ENCODE measurements at regions of chr5 and their contacts with region 1.

Region 1: DNA sequence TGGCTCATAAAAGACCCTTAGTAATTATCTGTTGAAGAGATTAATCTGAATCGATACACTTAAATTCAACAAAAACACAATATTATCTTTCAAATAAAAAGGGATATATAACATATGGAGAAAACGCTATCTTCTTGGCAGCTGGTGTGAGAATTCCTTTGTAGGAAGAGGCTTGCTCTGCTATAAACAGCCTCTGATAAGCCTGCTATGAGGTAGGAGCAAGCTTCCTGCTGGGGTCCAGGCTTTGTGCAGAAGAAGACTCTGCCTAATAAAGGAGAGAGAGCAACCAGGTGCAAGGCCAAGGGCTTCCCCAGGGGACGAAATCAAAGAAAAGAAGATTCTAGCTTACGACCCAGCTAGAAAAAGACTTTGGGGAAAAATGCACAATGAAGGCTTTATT is 43.3 kb upstream of the SSBP2 start:
- DNase-seq: no peak
- ATAC-seq: no peak
- H3K4me3 ChIP-seq: no peak overlapping the region
- H3K27ac ChIP-seq: no peak overlapping the region
- H3K4me1 ChIP-seq: peaks cover 0 to 2% of the 10 kb centered on the region in 2 donors
- H3K27me3 ChIP-seq: no peaks in the 10 kb centered on the region
- CTCF ChIP-seq: no peak

Region 2: GRCh38 chr5:81851481-81852178 is 57.4 kb after region 1 on chr5:
- intact Hi-C with region 1: loop called in 1 of 2 experiments (anchors 10 kb)
- DNase-seq: peak; percentile 96 to 99 (median 98)
- ATAC-seq: peak; percentile 97
- H3K4me3 ChIP-seq: peak overlapping the region; percentile 45 to 47
- H3K27ac ChIP-seq: peak overlapping the region; percentile 93 to 95
- H3K4me1 ChIP-seq: peaks cover 11 to 25% of the 10 kb centered on the region in 2 donors
- H3K27me3 ChIP-seq: no peaks in the 10 kb centered on the region
- CTCF ChIP-seq: no peak

Region 3: DNA sequence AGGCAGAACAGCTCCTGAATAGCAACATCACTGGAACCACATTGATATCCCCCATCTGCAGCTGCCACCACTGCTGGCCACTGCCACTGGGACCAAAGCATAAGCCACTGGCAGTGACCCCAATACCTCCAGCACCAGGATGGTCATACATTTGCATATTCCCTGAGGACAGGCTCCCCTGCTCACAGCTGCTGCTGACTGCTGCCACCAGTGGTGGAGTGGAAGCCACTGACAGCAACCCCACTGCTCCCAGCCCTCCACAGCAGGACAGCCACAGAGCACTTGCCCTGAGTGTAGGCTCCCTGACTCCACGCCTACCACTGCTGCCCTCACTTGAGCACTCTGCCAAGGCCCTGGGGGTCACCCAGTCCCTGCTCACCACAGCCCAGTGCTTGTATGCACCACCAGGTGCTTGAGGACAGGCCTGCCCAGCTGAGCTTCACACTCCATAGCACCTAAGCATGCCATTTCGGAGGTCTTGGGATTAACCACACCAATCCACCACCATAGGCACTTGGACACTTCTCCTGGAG is 811.3 kb after region 1 on chr5:
- intact Hi-C with region 1: no loop called
- DNase-seq: no peak
- ATAC-seq: no peak
- H3K4me3 ChIP-seq: no peak overlapping the region
- H3K27ac ChIP-seq: no peak overlapping the region
- H3K4me1 ChIP-seq: no peaks in the 10 kb centered on the region
- H3K27me3 ChIP-seq: no peaks in the 10 kb centered on the region
- CTCF ChIP-seq: no peak